ENCODE measurements at regions of chr9 and their contacts with region 1.

Region 1: DNA sequence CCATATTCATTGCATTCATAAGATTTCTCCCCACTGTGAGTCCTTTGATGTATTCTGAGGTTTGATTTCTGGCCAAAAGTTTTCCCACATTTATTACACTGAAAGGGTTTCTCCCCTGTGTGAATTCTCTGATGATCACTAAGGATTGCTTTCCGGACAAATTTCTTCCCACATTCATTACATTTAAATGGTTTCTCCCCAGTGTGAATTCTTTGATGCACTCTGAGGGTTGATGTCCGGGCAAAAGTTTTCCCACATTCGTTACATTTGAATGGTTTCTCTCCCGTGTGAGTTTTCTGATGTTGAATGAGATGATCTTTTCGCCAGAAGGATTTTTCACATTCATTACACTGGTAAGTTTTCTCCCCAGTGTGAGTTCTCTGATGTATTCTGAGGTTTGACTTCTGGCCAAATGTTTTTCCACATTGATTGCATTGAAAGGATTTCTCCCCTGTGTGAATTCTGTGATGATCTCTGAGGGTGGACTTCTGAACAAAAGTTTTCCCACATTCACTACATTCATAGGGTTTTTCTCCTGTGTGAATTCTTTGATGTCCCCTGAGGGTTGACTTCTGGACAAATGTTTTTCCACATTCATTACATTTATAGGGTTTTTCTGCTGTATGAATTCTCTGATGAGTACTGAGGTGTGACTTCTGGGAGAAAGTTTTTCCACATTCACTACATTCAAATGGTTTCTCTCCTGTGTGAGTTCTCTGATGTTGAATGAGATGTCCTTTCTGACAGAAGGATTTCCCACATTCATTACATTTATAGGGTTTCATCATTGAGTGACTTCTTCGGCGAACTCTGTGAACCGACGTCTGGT is 18.8 kb downstream of the ZNF510 start:
- DNase-seq: no peak
- ATAC-seq: no peak
- H3K4me3 ChIP-seq: no peak overlapping the region
- H3K4me3 Mint-ChIP-seq: no peak overlapping the region
- H3K27ac ChIP-seq: no peak overlapping the region
- H3K27ac Mint-ChIP-seq: no peak overlapping the region
- H3K4me1 ChIP-seq: no peaks in the 10 kb centered on the region
- H3K4me1 Mint-ChIP-seq: no peaks in the 10 kb centered on the region
- H3K27me3 ChIP-seq: no peaks in the 10 kb centered on the region
- H3K27me3 Mint-ChIP-seq: no peaks in the 10 kb centered on the region
- CTCF ChIP-seq: no peak

Region 2: DNA sequence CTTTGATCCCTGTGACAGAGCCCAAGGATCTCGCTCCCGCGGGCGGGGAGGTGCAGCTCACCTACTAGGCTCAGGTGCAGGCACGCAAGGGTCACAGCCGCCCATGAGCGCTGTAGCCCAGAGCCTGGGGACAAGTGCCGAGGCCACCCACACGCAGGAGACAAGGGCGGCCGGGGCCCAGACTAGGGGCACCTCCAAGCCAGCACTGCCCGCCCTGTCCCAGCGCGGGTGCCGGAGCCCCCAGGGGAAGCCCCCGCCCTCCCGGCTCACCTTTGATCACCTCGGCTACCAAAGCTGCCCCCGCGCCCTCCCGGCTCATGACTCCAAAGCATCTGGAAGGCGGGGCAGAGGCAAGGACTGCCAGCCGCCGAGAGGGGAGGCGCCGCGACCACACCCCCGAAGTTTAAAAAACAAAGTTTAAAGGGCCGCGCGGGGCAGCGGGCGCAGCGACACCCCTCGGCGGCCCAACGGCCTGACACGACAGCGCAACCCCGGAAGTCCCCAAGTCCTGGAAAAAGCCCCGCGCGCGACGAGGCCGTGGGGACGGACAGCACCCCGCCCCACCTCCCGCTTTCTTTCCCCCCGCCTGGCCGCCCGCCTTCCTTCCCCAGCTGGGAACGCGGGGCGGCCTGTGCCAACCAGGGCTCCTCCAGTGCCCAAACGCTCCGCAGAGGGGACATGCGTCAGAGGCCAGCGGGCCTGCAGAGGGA is 192.4 kb before region 1 on chr9:
- CTCF ChIA-PET with region 1: no interaction called
- POLR2A ChIA-PET with region 1: no interaction called
- intact Hi-C with region 1: no loop called
- DNase-seq: peak; percentile 65 to 92 (median 78)
- ATAC-seq: peak; percentile 83
- H3K4me3 ChIP-seq: peak overlapping the region; percentile 85
- H3K4me3 Mint-ChIP-seq: peak overlapping the region; percentile 85
- H3K27ac ChIP-seq: peak overlapping the region; percentile 64 to 73
- H3K27ac Mint-ChIP-seq: peak overlapping the region; percentile 62
- H3K4me1 ChIP-seq: peaks cover 15% of the 10 kb centered on the region
- H3K4me1 Mint-ChIP-seq: peaks cover 31% of the 10 kb centered on the region
- H3K27me3 ChIP-seq: no peaks in the 10 kb centered on the region
- H3K27me3 Mint-ChIP-seq: no peaks in the 10 kb centered on the region
- CTCF ChIP-seq: peak; percentile 82

Region 3: DNA sequence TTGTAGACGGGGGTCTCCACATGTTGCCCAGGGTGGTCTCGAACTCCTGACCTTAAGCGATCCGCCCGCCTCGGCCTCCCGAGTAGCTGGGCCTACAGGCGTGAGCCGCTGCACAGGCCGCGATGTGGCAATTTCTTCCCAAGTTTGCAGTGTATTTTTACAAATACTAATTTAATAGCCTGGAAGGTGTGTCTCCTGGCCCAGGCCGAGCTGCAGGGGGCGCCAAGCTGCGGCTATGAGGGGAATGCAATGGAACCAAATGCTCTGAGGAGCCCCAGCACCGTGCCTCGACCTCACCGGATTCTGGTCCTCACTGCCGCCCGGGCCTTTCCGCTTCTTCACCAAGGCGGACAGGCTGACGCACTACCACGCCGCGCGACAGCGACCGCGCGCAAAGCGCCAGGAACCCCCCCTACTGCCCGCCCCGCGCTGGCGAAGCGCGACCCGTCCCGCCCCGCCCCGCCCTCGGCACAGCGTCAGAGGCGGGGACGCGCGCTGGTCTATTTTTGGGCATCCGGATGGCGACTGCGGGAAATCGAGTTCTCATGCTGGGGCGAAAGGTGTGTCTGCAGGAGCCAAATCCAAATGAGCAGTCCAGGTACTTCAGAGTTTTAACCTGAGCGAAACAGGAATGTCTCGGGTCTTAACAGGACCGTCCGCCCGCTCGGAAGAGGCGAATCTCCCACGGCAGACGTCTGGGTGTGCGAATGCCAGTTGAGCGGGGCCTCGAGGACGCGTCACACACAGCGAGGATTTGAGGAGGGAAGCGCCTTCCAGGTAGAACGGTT is 72.3 kb before region 1 on chr9:
- CTCF ChIA-PET with region 1: no interaction called
- POLR2A ChIA-PET with region 1: no interaction called
- intact Hi-C with region 1: no loop called
- DNase-seq: peak; percentile 57 to 92 (median 70)
- ATAC-seq: peak; percentile 92
- H3K4me3 ChIP-seq: peak overlapping the region; percentile 56
- H3K4me3 Mint-ChIP-seq: peak overlapping the region; percentile 80
- H3K27ac ChIP-seq: no peak overlapping the region
- H3K27ac Mint-ChIP-seq: peak overlapping the region; percentile 72
- H3K4me1 ChIP-seq: peaks cover 9% of the 10 kb centered on the region
- H3K4me1 Mint-ChIP-seq: peaks cover 7% of the 10 kb centered on the region
- H3K27me3 ChIP-seq: no peaks in the 10 kb centered on the region
- H3K27me3 Mint-ChIP-seq: peaks cover 24% of the 10 kb centered on the region
- CTCF ChIP-seq: peak; percentile 40

Region 4: DNA sequence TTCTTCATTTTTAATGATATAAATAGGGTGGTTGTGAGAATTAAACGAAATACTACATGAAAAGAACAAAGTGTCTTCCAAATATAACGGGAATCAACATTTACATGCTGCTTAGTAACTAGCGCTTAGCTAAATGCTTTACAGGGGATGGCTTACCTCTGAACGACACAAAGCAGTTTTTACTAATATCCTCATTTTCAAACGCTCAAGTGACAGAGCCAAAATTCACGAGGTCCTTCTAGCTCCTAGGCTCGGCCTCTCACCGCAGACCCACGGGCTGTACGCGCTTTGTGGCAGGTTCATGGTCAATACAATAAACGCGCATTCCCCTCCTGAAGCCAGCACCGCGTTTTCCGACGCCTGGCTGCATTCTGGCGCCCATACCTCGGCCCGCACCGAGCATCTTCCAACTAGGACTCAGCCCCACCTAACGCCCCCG is 18.4 kb after region 1 on chr9:
- CTCF ChIA-PET with region 1: no interaction called
- POLR2A ChIA-PET with region 1: no interaction called
- intact Hi-C with region 1: no loop called
- DNase-seq: peak in 1 of 14 experiments; percentile 24
- ATAC-seq: peak; percentile 40
- H3K4me3 ChIP-seq: peak overlapping the region; percentile 78
- H3K4me3 Mint-ChIP-seq: peak overlapping the region; percentile 99
- H3K27ac ChIP-seq: peak overlapping the region; percentile 78 to 80
- H3K27ac Mint-ChIP-seq: peak overlapping the region; percentile 99
- H3K4me1 ChIP-seq: peaks cover 13% of the 10 kb centered on the region
- H3K4me1 Mint-ChIP-seq: peaks cover 57% of the 10 kb centered on the region
- H3K27me3 ChIP-seq: no peaks in the 10 kb centered on the region
- H3K27me3 Mint-ChIP-seq: no peaks in the 10 kb centered on the region
- CTCF ChIP-seq: no peak

Region 5: DNA sequence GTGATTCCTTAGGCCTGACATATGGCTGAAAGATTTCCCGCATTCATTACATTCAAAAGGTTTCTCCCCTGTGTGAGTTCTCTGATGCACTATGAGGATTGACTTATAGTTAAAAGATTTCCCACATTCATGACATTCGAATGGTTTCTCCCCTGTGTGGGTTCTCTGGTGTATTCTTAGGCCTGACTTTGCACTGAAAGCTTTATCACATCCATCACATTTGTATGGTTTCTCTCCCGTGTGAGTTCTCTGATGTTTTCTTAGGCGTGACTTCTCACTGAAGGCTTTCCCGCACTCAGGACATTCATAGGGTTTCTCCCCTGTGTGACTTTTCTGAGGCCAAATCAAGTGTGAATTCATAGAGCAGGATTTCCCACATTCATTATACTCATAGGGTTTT is 59.5 kb after region 1 on chr9:
- CTCF ChIA-PET with region 1: no interaction called
- POLR2A ChIA-PET with region 1: no interaction called
- intact Hi-C with region 1: loop called in 1 of 2 experiments (anchors 10 kb)
- DNase-seq: no peak
- ATAC-seq: no peak
- H3K4me3 ChIP-seq: no peak overlapping the region
- H3K4me3 Mint-ChIP-seq: no peak overlapping the region
- H3K27ac ChIP-seq: no peak overlapping the region
- H3K27ac Mint-ChIP-seq: no peak overlapping the region
- H3K4me1 ChIP-seq: no peaks in the 10 kb centered on the region
- H3K4me1 Mint-ChIP-seq: no peaks in the 10 kb centered on the region
- H3K27me3 ChIP-seq: no peaks in the 10 kb centered on the region
- H3K27me3 Mint-ChIP-seq: no peaks in the 10 kb centered on the region
- CTCF ChIP-seq: no peak

Region 6: DNA sequence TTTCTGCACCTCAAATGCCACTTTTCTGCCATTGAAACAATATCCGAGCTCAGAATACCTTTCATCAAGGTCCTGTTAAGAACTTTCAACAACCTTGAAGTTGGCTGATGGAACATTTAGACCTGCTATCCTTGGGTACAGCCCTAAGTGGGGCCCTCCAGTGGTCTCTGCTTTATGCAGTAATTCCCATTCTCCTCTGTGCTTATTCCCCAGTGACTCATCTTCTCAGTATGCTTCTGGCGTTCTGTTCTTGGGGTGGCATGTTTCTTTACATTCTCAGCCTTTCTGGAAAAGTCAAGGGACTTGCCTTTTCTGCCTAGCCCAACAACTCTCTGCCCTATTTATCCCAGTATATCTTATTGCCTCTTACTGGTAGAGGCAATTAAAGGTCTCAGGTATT is 1231.2 kb after region 1 on chr9:
- CTCF ChIA-PET with region 1: no interaction called
- POLR2A ChIA-PET with region 1: no interaction called
- intact Hi-C with region 1: loop called in 1 of 2 experiments (anchors 10 kb)
- DNase-seq: peak in 1 of 14 experiments; percentile 35
- ATAC-seq: no peak
- H3K4me3 ChIP-seq: no peak overlapping the region
- H3K4me3 Mint-ChIP-seq: peak overlapping the region; percentile 21
- H3K27ac ChIP-seq: no peak overlapping the region
- H3K27ac Mint-ChIP-seq: peak overlapping the region; percentile 97
- H3K4me1 ChIP-seq: peaks cover 62% of the 10 kb centered on the region
- H3K4me1 Mint-ChIP-seq: peaks cover 95% of the 10 kb centered on the region
- H3K27me3 ChIP-seq: no peaks in the 10 kb centered on the region
- H3K27me3 Mint-ChIP-seq: no peaks in the 10 kb centered on the region
- CTCF ChIP-seq: no peak